PC-3 (cell line): ENCODE measurements at regions of chr1 and their contacts with region 1.

Region 1: DNA sequence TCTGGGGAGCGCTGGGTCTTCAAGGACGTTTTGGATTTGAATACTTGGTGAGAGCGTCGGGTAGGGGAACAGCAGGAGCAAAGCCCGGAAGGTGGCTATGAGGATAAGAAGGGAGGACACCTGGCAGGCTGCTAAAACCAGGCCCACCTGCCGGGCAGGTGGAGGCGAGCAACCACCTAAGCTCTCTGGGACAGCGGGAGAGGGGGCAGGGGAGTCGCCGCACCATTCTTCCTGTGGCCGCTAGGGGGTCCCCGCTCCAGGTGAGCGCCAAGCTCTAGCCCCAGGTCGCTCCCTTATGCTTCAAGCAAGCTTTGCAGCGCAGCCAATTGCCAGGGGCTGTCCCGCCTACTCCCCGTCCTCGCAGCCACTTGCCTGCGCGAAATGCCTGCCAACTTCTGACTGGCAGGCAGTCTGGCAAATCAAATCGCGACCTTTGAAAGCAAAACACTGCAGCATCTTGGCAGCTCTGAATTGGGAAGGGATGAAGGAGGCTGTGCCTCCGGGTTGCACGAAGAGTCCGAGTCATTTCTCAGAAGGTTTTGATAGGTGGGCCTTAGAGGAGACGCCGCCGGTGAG is at the start of gene NIPAL3:
- DNase-seq: peak; percentile 99
- ATAC-seq: peak; percentile 61
- H3K4me3 ChIP-seq: peak within 1 kb of the TSS; percentile 89
- H3K27ac ChIP-seq: peak within 1 kb of the TSS; percentile 94
- H3K4me1 ChIP-seq: peaks cover 72% of the 10 kb centered on the region
- H3K27me3 ChIP-seq: no peaks in the 10 kb centered on the region
- CTCF ChIP-seq: peak; percentile 69
- total RNA-seq, gene NIPAL3: 35.2 and 43.7 TPM in 2 replicates

Region 2: GRCh38 chr1:24150234-24151174 is 264.9 kb before region 1 on chr1:
- CTCF ChIA-PET with region 1: interaction called, 3 read pairs
- POLR2A ChIA-PET with region 1: interaction called, 11 read pairs
- intact Hi-C with region 1: no loop called
- DNase-seq: peak; percentile 95
- ATAC-seq: peak; percentile 92
- H3K4me3 ChIP-seq: peak overlapping the region; percentile 68
- H3K27ac ChIP-seq: peak overlapping the region; percentile 77
- H3K4me1 ChIP-seq: peaks cover 23% of the 10 kb centered on the region
- H3K27me3 ChIP-seq: no peaks in the 10 kb centered on the region
- CTCF ChIP-seq: peak; percentile 79

Region 3: GRCh38 chr1:24463776-24464735 is 48.6 kb after region 1 on chr1:
- CTCF ChIA-PET with region 1: no interaction called
- POLR2A ChIA-PET with region 1: no interaction called
- intact Hi-C with region 1: loop called (anchors 5 kb)
- DNase-seq: no peak
- ATAC-seq: no peak
- H3K4me3 ChIP-seq: no peak overlapping the region
- H3K27ac ChIP-seq: no peak overlapping the region
- H3K4me1 ChIP-seq: peaks cover 4% of the 10 kb centered on the region; the same call in 1 of the 2 replicates
- H3K27me3 ChIP-seq: no peaks in the 10 kb centered on the region
- CTCF ChIP-seq: no peak

Region 4: GRCh38 chr1:24502709-24503058 is 87.3 kb after region 1 on chr1 and contains the start of gene RCAN3:
- CTCF ChIA-PET with region 1: no interaction called
- POLR2A ChIA-PET with region 1: interaction called, 7 read pairs
- intact Hi-C with region 1: loop called (anchors 2 kb)
- DNase-seq: peak; percentile 93
- ATAC-seq: peak; percentile 88
- H3K4me3 ChIP-seq: peak within 1 kb of the TSS; percentile 89
- H3K27ac ChIP-seq: peak within 1 kb of the TSS; percentile 77
- H3K4me1 ChIP-seq: peaks cover 26% of the 10 kb centered on the region
- H3K27me3 ChIP-seq: no peaks in the 10 kb centered on the region
- CTCF ChIP-seq: no peak
- total RNA-seq, gene RCAN3: 23.0 and 25.6 TPM in 2 replicates

Region 5: DNA sequence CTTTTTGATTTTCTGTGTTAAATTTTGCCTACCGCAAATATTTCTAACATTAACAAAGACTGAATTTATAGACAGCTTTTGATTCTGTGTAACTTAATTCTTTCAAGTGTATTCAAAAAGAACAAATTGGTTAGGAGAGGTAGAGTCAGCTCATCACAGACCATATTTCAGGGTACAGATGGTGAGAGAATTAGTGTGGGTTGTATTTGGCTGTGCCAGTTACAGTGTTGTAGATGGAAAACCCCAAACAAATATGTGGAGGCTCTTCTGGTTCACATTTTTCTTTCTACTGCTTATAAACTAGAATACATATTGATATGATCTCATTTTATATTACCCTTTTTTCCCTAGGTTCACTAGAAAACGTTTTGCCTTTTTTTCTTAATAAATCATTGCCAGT is 98.3 kb after region 1 on chr1:
- CTCF ChIA-PET with region 1: interaction called, 3 read pairs
- POLR2A ChIA-PET with region 1: interaction called, 3 read pairs
- intact Hi-C with region 1: loop called (anchors 5 kb)
- DNase-seq: no peak
- ATAC-seq: no peak
- H3K4me3 ChIP-seq: no peak overlapping the region
- H3K27ac ChIP-seq: no peak overlapping the region
- H3K4me1 ChIP-seq: peaks cover 20% of the 10 kb centered on the region
- H3K27me3 ChIP-seq: no peaks in the 10 kb centered on the region
- CTCF ChIP-seq: no peak

Region 6: DNA sequence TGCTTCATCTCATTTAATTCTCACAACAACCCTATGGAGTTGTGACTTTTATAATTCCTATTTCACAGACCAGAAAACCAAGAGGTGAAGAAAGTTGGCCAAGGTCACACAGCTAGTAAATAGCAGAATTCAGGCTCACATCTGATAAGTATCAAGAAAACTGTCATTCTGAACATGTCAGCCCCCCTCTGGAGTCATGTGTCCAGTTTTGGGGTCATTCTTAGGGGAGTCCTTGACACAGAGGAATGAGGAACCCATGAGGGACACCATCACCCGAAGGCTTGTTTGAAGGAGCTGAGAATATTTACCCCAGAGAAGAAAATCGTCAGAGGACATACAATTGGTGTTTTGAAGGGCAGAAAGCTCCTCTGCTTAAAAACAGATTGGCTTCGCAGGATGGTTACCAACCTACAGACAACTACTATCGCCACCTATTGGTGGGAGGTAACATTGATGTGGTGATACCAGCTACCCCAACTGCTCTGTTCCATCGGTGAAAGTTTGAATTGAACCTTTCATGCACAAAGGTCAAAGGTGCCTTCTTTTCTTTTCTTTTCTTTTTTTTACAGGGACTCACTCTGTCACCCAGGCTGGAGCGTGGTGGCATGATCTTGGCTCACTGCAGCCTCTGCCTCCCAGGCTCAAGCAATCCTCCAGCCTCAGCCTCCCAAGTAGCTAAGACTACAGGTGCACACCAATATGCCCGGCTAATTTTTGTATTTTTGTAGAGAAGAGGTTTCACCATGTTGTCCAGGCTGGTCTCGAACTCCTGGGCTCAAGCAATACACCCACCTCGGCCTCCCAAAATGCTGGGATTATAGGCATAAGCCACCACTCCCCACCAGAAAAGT is 171.8 kb after region 1 on chr1:
- CTCF ChIA-PET with region 1: no interaction called
- POLR2A ChIA-PET with region 1: no interaction called
- intact Hi-C with region 1: loop called (anchors 1 kb)
- DNase-seq: peak; percentile 73
- ATAC-seq: peak; percentile 84
- H3K4me3 ChIP-seq: no peak overlapping the region
- H3K27ac ChIP-seq: no peak overlapping the region
- H3K4me1 ChIP-seq: no peaks in the 10 kb centered on the region; the same call in 1 of the 2 replicates
- H3K27me3 ChIP-seq: no peaks in the 10 kb centered on the region
- CTCF ChIP-seq: peak; percentile 82

Region 7: GRCh38 chr1:24635195-24635843 is 219.9 kb after region 1 on chr1:
- CTCF ChIA-PET with region 1: interaction called, 7 read pairs
- POLR2A ChIA-PET with region 1: interaction called, 4 read pairs
- intact Hi-C with region 1: loop called (anchors 2 kb)
- DNase-seq: peak; percentile 85
- ATAC-seq: peak; percentile 82
- H3K4me3 ChIP-seq: no peak overlapping the region
- H3K27ac ChIP-seq: no peak overlapping the region
- H3K4me1 ChIP-seq: peaks cover 11% of the 10 kb centered on the region; the same call in 1 of the 2 replicates
- H3K27me3 ChIP-seq: no peaks in the 10 kb centered on the region
- CTCF ChIP-seq: peak; percentile 88